ENCODE measurements at regions of chr5 and their contacts with region 1.

Region 1: GRCh38 chr5:63262185-63262981 is 683.8 kb downstream of the LRRC70 start:
- DNase-seq: peak; percentile 74
- H3K4me3 ChIP-seq: no peak overlapping the region
- H3K27ac ChIP-seq: peak overlapping the region; percentile 96
- H3K4me1 ChIP-seq: peaks cover 25% of the 10 kb centered on the region
- H3K27me3 ChIP-seq: no peaks in the 10 kb centered on the region
- CTCF ChIP-seq: no peak
- POLR2A ChIP-seq: no peak

Region 2: DNA sequence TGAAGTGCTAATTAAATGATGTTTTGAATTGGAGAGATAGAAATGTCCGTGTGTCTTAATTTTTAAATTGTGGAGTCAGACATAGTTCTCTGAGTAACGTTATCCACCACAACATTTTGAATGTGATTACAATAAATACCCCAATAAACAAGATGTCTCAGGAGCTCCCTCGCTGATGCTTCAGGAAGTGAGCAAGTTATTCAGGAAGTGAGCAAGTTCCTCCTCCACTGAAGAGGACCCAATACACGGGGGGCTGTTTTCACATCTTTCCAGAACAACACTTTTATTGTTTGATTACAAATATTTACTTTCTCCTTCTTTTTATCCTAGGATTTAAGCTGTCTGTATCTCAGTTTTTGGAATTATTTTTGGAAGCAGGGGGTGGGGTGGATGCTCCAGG is 320.0 kb before region 1 on chr5:
- CTCF ChIA-PET with region 1: no interaction called
- POLR2A ChIA-PET with region 1: no interaction called
- dilution Hi-C with region 1: no loop called
- intact Hi-C with region 1: loop called (anchors 1 kb)
- DNase-seq: peak; percentile 29
- H3K4me3 ChIP-seq: no peak overlapping the region
- H3K27ac ChIP-seq: peak overlapping the region; percentile 42
- H3K4me1 ChIP-seq: peaks cover 24% of the 10 kb centered on the region
- H3K27me3 ChIP-seq: no peaks in the 10 kb centered on the region
- CTCF ChIP-seq: no peak
- POLR2A ChIP-seq: no peak

Region 3: DNA sequence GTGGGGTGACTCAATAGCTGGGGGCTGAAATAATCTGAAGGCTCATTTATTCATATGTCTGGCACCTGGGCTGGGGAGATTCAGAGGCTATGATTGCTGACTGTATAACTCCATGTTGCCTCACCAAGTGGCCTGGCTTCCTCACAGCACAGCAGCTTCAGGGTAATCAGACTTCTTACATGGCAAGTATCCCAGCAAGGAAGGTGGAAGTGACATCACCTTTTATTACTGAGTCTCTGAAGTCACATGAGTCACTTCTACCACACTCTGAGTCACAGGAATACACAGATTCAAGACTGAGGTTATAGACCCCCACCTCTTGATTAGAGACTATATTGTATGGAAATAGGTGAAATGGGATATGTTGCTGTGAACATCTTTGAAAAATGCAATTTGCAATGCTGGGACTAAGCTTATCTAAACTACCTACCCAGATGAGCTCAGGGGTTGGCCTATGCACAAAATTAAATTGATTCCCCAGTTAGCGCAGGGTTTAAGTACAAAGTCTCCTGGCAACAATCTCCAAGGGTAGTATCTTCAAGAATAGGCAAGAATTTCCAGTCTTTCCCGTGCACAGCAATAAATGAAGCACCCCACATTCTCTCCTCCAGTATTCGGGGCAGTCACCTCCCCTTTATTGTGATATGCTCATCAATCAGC is 130.6 kb before region 1 on chr5:
- CTCF ChIA-PET with region 1: no interaction called
- POLR2A ChIA-PET with region 1: no interaction called
- dilution Hi-C with region 1: no loop called
- intact Hi-C with region 1: loop called (anchors 5 kb)
- DNase-seq: peak; percentile 15
- H3K4me3 ChIP-seq: no peak overlapping the region
- H3K27ac ChIP-seq: no peak overlapping the region
- H3K4me1 ChIP-seq: no peaks in the 10 kb centered on the region
- H3K27me3 ChIP-seq: no peaks in the 10 kb centered on the region
- CTCF ChIP-seq: no peak
- POLR2A ChIP-seq: no peak